ENCODE measurements at regions of chr1 and their contacts with region 1.

Region 1: DNA sequence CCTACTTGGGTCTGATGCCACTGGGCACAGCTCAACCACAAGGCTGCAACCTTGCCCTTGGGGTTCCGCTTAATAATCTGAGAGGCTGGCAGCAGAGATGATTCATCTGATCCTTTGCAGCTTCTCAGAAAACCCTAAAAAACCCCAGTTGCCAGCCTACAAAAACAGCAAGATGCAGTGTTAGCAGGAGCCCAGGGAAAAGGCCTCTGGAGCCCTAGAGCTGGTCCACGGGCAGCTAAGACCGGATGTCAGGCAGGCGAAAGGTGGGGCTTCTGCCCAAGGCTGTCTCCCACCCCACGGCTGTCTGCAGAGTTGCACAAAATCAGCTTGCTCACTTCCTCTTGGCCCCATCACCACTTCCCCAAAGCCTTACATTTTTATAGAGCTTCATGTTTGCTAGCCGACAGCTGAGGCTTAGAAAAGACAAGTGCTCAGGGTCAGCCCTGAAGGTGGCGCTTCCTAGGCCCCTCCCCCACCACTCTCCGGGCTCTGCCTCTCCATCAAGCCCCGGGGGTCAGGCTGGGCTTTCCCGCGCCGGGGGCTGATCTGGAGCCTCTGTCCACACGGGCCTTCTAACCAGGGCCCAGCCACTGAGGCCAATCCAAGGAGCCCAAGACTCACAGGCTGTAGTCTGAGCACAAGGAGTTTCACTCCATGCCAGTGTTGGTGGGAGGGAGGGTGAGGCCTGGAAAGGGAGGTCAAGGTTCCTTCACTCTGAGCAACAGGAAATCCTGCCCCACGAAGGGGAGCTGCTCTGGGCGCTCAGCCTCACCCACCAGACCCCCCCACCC is 4.2 kb upstream of the ADORA3 start:
- DNase-seq: peak; percentile 52
- H3K4me3 Mint-ChIP-seq: peak overlapping the region; percentile 72
- H3K27ac Mint-ChIP-seq: peak overlapping the region; percentile 83
- H3K4me1 Mint-ChIP-seq: peaks cover 58% of the 10 kb centered on the region
- H3K27me3 Mint-ChIP-seq: no peaks in the 10 kb centered on the region

Region 2: GRCh38 chr1:111334169-111334568 is 173.4 kb before region 1 on chr1:
- intact Hi-C with region 1: no loop called
- DNase-seq: peak; percentile 32
- H3K4me3 Mint-ChIP-seq: no peak overlapping the region
- H3K27ac Mint-ChIP-seq: no peak overlapping the region
- H3K4me1 Mint-ChIP-seq: peaks cover 5% of the 10 kb centered on the region
- H3K27me3 Mint-ChIP-seq: peaks cover 3% of the 10 kb centered on the region

Region 3: GRCh38 chr1:111481387-111482221 is 26.0 kb before region 1 on chr1:
- intact Hi-C with region 1: loop called (anchors 1 kb)
- DNase-seq: peak; percentile 31
- H3K4me3 Mint-ChIP-seq: no peak overlapping the region
- H3K27ac Mint-ChIP-seq: no peak overlapping the region
- H3K4me1 Mint-ChIP-seq: peaks cover 20% of the 10 kb centered on the region
- H3K27me3 Mint-ChIP-seq: peaks cover 47% of the 10 kb centered on the region

Region 4: DNA sequence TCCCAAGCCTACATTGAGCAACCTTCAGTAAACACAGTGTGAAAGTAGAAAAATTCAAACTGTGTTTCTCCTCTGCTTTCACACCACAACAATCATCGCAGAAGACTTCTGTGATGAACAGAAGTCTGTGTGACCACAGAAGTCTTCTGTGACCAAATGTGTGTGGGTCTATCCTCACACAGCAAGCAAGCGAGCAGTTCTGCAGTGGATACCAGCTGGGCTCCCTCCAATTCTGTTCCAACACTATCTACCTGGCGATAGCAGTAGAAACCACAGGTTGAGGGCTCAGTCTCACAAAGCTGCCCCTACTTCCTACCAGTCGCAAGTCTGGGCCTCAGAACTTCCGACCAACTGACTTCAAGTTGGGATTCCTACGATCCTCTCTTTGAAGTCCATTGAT is 90.9 kb after region 1 on chr1:
- intact Hi-C with region 1: loop called (anchors 1 kb)
- DNase-seq: peak; percentile 39
- H3K4me3 Mint-ChIP-seq: peak overlapping the region; percentile 46
- H3K27ac Mint-ChIP-seq: peak overlapping the region; percentile 99
- H3K4me1 Mint-ChIP-seq: peaks cover 96% of the 10 kb centered on the region
- H3K27me3 Mint-ChIP-seq: no peaks in the 10 kb centered on the region

Region 5: GRCh38 chr1:111656086-111657017 is 148.7 kb after region 1 on chr1:
- intact Hi-C with region 1: loop called (anchors 1 kb)
- DNase-seq: no peak
- H3K4me3 Mint-ChIP-seq: no peak overlapping the region
- H3K27ac Mint-ChIP-seq: peak overlapping the region; percentile 5
- H3K4me1 Mint-ChIP-seq: peaks cover 43% of the 10 kb centered on the region
- H3K27me3 Mint-ChIP-seq: no peaks in the 10 kb centered on the region

Region 6: DNA sequence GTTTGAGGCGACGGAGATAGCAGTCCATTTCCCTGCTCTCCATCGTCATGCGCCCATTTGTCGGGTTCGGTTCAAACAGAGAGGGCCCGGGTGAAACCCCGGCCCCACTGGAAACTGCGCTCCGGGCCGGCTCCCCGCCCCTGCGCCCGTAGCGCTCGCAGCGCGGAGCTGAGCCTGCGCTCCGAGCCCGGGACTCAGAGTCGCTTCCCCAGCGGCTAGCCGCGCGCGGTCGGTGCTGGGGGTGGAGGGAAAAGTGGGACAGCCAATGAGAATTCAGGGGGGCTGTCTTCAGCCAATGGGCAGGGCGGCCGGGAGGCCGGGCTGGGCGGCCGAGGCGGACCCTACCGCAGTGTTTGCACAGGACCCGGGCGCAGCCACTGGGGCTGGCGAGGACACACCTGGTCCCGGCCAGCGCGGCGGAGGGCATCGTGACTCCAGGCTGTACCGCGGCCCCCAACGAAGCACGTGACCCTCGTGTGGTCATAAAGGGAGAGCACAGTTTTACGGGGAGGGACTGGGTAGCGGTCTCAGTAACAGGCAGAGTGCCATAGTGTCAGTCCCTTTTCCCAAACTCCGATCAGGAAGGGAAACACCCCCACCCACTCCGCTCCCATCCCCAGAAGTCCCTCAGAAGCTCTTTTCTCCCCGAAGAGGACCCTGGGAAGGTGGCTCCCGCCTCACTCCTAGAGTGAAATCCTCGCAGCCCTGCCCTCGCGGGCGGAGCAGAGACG is 231.8 kb after region 1 on chr1 and contains the start of gene INKA2:
- intact Hi-C with region 1: loop called (anchors 2 kb)
- DNase-seq: peak; percentile 78
- H3K4me3 Mint-ChIP-seq: peak within 1 kb of the TSS; percentile 91
- H3K27ac Mint-ChIP-seq: peak within 1 kb of the TSS; percentile 70
- H3K4me1 Mint-ChIP-seq: peaks cover 17% of the 10 kb centered on the region
- H3K27me3 Mint-ChIP-seq: peaks cover 43% of the 10 kb centered on the region
- total RNA-seq, gene INKA2: 1.3 and 1.7 TPM in 2 replicates

Region 7: DNA sequence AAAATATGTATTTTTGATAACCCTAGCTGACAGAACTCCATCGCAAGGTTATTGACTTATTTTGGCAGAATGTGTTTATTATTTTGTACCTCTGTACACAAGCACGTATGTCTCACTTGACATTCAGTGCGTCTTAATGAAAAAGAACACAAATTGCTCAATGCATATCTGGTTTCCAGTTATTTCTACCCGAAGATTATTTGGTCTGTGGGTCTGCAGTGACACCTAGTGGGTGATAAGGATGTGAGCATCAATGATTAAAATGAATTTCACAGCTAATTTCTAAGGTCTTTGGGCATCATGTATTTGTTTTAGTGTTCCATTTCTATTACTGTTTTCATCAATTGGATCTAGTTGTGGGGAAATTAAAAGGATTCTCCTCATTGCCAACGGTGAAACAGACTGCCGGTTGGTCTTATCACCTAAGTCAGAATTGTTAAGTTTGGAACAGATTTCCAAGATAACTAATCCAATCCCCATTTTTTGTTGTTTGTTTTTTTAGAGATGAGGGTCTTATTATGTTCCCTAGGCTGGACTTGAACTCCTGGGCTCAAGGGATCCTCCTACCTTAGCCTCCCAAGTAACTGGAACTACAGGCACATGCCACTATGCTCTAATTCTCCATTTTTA is 262.0 kb after region 1 on chr1:
- intact Hi-C with region 1: loop called (anchors 1 kb)
- DNase-seq: peak; percentile 14
- H3K4me3 Mint-ChIP-seq: no peak overlapping the region
- H3K27ac Mint-ChIP-seq: no peak overlapping the region
- H3K4me1 Mint-ChIP-seq: peaks cover 15% of the 10 kb centered on the region
- H3K27me3 Mint-ChIP-seq: no peaks in the 10 kb centered on the region

Measured in activated T-helper 1 cell treated with anti-CD3 and anti-CD28 coated beads, Interleukin-12 subunit alpha, Interleukin-12 subunit beta, Interleukin-2, Interleukin-4 antibody, amounts not matched to agents 30 ng/mL and 10 ng/mL and 1 ng/mL, durations not matched to agents 14 hours and 24 hours and 36 hours (primary cell).